Activated B cell treated with CpG ODN at 0.5 μM for 24 hours (primary cell): ENCODE measurements at regions of chr10 and their contacts with region 1.

Region 1: DNA sequence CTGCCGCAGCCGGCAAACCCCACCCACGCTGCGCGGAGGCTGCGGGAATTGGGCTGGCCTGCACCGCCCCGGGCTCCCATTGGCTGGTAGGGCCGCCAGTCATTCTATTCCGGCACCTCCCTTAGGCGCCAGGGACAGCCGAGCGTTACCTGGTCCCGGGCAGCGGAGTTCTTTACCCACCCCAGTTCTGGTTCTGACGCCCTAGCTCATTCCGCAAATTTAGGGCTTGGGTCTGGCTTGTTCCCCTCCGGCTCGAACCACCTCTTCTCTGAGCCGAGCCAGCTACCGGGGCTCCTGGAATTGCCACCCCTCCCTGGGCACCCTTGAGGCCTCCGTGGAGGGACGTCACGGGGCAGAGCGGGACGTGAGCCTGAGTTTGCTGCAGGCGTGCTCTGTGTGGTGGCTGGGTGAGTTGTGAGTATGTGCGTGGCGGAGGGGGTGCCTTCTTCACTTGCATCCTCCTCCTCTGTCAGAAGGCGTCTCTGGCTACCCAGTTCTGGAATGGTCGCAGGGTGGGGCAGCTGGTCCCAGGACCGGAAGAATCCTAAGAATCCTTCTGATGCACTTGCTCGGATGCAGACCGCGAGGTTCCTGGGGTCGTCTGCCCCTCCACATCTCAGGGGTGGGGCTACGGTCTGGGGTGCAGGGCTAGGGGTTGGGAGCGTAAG is at the starts of genes PDZD7 and SFXN3:
- DNase-seq: peak; percentile 93
- ATAC-seq: peak; percentile 91
- H3K4me3 Mint-ChIP-seq: peak within 1 kb of the TSS; percentile 92
- H3K27ac Mint-ChIP-seq: peak within 1 kb of the TSS; percentile 69
- H3K4me1 Mint-ChIP-seq: peaks cover 20% of the 10 kb centered on the region
- H3K27me3 Mint-ChIP-seq: peaks cover 19% of the 10 kb centered on the region
- CTCF ChIP-seq: no peak
- total RNA-seq, gene PDZD7: 0.11 TPM in 1 of 2 replicates, not detected in the other
- total RNA-seq, gene SFXN3: 9.5 and 9.8 TPM in 2 replicates

Region 2: DNA sequence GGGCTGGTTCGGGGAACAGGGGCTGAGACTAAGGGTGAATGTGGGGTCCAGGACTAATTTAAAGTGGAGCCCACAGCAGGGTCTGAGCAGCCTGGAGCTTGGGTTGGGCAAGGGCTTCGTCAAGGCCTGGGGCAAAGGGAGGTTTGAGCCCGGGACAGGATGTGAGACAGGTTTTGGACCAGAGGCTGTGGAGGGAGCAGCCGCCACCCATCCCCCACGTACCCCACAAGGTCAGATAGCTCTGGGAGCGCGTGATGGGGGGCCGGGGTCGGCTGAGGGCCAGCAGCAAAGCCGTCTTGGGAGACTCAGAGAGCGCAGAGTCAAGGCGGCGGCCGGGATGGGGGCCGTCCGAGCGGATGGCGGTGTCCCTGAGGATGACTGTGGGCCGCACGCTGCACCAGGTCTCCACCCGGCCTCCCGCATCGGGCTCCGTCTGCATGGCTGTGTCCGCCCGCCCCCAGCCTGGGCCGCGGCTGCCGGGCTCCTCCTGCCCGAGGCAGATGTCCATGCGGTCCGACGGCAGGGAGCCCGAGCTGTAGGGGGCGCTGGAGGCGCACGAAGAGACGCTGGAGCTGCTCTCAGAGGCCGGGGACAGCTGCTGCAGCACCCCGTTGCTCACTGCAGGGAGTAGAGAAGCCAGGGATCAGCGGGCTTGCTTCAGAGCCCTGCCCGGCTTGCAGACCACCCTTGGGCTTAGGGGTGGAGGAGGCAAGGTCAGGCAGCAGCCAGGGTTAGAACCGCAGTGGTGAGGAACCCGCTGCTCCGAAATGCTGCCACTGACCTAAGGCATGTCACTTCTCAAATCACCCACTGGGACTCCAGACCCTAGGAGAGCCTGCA is 12.4 kb before region 1 on chr10:
- CTCF ChIA-PET with region 1: interaction called, 20 read pairs
- POLR2A ChIA-PET with region 1: interaction called, 9 read pairs
- intact Hi-C with region 1: loop called (anchors 1 kb)
- DNase-seq: peak; percentile 39
- ATAC-seq: peak; percentile 59
- H3K4me3 Mint-ChIP-seq: peak overlapping the region; percentile 39
- H3K27ac Mint-ChIP-seq: no peak overlapping the region
- H3K4me1 Mint-ChIP-seq: peaks cover 17% of the 10 kb centered on the region
- H3K27me3 Mint-ChIP-seq: peaks cover 27% of the 10 kb centered on the region
- CTCF ChIP-seq: no peak

Region 3: GRCh38 chr10:101110856-101111546 is 79.7 kb after region 1 on chr10:
- CTCF ChIA-PET with region 1: no interaction called
- POLR2A ChIA-PET with region 1: no interaction called
- intact Hi-C with region 1: no loop called
- DNase-seq: no peak
- ATAC-seq: no peak
- H3K4me3 Mint-ChIP-seq: no peak overlapping the region
- H3K27ac Mint-ChIP-seq: no peak overlapping the region
- H3K4me1 Mint-ChIP-seq: no peaks in the 10 kb centered on the region
- H3K27me3 Mint-ChIP-seq: peaks cover 40% of the 10 kb centered on the region
- CTCF ChIP-seq: no peak

Region 4: DNA sequence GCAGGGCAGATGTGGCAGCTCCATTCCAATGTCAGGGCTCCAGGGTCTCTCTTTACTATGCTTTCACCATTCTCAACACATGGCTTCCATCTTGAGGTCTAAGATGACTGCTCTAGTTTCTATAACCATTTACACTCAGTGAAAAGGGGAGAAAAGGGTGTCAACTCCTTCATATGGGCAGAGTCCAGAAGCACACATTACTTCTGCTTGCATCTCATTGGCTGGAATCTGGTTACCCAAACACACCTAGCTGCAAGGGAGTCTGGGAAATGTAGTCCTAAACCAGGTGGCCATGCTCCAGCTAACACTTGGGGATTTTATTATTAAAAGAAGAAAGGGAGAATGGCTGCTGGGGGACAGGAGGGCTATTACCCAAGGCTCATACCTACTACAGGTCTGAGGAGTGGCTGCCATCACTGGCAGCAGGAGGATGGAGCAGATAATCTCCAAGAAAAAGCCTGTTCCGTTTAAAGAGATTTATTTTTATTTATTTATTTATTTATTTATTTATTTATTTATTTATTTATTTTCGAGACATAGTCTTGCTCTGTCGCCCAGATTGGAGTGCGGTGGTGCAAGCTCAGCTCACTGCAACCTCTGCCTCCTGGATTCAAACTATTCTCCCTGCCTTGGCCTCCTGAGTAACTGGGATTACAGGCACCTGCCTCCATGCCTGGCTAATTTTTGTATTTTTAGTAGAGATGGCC is 227.1 kb after region 1 on chr10:
- CTCF ChIA-PET with region 1: no interaction called
- POLR2A ChIA-PET with region 1: no interaction called
- intact Hi-C with region 1: no loop called
- DNase-seq: no peak
- ATAC-seq: no peak
- H3K4me3 Mint-ChIP-seq: no peak overlapping the region
- H3K27ac Mint-ChIP-seq: no peak overlapping the region
- H3K4me1 Mint-ChIP-seq: no peaks in the 10 kb centered on the region
- H3K27me3 Mint-ChIP-seq: peaks cover 47% of the 10 kb centered on the region
- CTCF ChIP-seq: no peak